ENCODE measurements at regions of chr7 and their contacts with region 1.

Region 1: GRCh38 chr7:774161-775109 is 47.4 kb upstream of the PRKAR1B start:
- DNase-seq: peak; percentile 36
- H3K4me3 ChIP-seq: no peak overlapping the region
- H3K27ac ChIP-seq: no peak overlapping the region
- H3K4me1 ChIP-seq: no peaks in the 10 kb centered on the region
- H3K27me3 ChIP-seq: no peaks in the 10 kb centered on the region
- CTCF ChIP-seq: peak; percentile 91 to 95

Region 2: GRCh38 chr7:322111-322671 is 452.2 kb before region 1 on chr7:
- CTCF ChIA-PET with region 1: no interaction called
- dilution Hi-C with region 1: no loop called
- in situ Hi-C with region 1: loop called (anchors 5 kb)
- intact Hi-C with region 1: loop called (anchors 1 kb)
- DNase-seq: peak; percentile 48
- H3K4me3 ChIP-seq: no peak overlapping the region
- H3K27ac ChIP-seq: no peak overlapping the region
- H3K4me1 ChIP-seq: no peaks in the 10 kb centered on the region
- H3K27me3 ChIP-seq: no peaks in the 10 kb centered on the region
- CTCF ChIP-seq: peak; percentile 64 to 78

Region 3: DNA sequence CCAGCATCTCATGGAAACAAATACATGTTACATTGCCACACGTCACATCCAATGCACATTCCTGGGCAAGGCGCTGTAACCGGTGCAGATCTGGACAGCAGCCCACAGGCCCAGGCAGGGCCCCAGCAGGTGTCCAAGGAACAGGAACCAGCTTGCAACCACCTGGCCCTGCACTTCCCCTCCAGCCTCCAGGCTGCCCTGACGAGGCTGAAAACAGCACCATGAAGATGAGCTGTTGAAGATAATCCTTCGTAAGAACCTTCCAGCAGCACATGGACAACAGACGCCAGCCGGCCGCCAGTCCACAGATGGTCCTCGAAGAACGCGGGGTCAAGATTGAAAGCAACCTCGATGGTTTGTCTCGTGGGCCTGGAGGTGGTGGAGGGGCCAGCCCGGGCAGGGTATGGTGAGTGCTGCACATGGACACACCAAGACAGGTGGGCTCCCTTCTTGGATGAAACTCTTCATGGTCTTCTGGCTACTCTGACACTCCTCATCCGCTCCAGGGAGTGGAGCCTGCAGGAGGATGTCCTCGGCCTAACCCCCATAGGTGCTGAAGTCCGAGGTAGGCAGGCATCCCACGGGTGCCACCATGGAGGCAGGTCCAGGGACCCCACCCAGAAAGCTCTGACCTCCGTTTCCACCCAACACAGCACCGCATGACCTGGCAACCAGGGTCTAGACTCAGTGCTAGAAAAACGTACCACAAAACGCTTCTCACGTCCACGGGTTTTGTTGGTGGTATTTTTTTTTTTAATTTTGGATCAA is 277.7 kb before region 1 on chr7:
- CTCF ChIA-PET with region 1: no interaction called
- dilution Hi-C with region 1: no loop called
- in situ Hi-C with region 1: no loop called
- intact Hi-C with region 1: loop called (anchors 1 kb)
- DNase-seq: peak; percentile 90
- H3K4me3 ChIP-seq: no peak overlapping the region
- H3K27ac ChIP-seq: peak overlapping the region; percentile 56
- H3K4me1 ChIP-seq: peaks cover 30% of the 10 kb centered on the region
- H3K27me3 ChIP-seq: no peaks in the 10 kb centered on the region
- CTCF ChIP-seq: peak in 1 of 2 donors; percentile 18

Region 4: DNA sequence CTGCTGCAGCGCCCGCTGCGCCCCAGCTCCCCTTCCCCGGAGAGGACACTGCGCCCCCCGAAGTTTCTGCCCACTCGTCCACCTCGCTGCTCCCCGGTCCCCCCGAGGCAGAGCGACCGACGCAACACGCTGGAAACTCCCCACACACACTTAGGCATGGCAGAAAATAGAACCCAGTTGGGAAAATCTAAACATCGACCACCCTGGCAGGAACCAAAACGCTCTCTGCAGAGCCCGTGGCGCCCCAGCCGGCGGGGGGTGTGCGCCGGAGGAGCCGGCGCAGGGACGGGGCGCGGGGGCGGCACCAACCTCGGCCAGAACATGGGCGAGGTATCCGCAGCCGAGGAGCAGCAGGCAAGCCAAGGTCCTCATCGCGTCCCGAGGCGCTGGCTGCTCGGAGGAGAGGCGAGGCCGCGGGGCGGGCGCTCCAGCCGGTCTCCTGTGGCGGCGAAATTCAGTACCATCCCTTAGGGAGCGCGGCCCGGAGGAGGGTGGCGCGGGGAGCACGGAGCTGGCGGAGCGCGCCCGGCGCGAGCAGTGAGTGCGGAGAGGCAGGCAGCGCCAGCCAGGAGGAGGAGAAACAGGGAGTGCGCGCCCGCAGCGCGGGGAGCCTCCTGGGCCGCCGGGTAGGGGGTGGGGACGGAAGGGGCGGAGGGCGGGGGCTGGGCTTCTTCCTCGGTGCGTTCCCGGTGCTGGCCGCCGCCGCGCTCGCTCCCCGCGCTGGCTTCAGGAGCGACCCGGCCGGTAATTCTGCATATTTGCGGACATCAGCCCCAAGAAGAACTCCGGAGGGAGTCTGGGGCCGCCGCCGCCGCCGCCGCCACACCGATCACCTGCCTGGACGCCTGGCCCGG is 255.6 kb before region 1 on chr7:
- CTCF ChIA-PET with region 1: no interaction called
- dilution Hi-C with region 1: no loop called
- in situ Hi-C with region 1: loop called in 1 of 2 experiments (anchors 10 kb)
- intact Hi-C with region 1: no loop called
- DNase-seq: peak; percentile 82
- H3K4me3 ChIP-seq: peak overlapping the region; percentile 66 to 92 (median 88)
- H3K27ac ChIP-seq: peak overlapping the region; percentile 46
- H3K4me1 ChIP-seq: peaks cover 50% of the 10 kb centered on the region
- H3K27me3 ChIP-seq: no peaks in the 10 kb centered on the region
- CTCF ChIP-seq: no peak

Region 5: GRCh38 chr7:657565-658119 is 116.8 kb before region 1 on chr7:
- CTCF ChIA-PET with region 1: no interaction called
- dilution Hi-C with region 1: no loop called
- in situ Hi-C with region 1: no loop called
- intact Hi-C with region 1: no loop called
- DNase-seq: no peak
- H3K4me3 ChIP-seq: no peak overlapping the region
- H3K27ac ChIP-seq: no peak overlapping the region
- H3K4me1 ChIP-seq: no peaks in the 10 kb centered on the region
- H3K27me3 ChIP-seq: no peaks in the 10 kb centered on the region
- CTCF ChIP-seq: no peak

Region 6: DNA sequence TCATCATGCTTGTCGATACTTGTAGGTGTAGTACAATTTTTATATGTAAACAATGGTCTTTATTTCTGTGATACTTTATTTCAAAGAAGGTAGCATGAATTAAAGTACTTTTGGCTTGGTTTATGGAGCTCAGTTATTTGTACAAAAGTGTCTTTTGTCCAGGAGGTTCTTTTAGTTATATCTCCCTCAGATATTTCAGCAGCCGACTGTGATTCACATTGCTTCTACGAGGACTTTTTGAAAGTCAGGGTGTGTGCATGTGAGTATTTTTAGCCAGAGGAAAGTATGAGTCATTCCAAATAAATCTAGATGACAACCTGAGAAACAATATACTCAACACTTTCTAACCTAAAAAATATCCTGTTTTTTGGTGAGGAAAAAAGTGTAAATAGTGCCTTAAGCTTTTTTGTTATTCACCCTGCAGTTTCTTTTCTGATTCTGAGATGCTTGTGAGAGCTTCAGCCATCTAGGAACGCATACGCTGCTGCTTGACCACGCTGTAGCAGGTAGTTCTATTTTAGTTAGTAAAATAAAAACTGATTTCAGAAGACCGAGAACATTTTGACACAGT is 57.2 kb after region 1 on chr7:
- CTCF ChIA-PET with region 1: no interaction called
- dilution Hi-C with region 1: loop called (anchors 10 kb)
- in situ Hi-C with region 1: no loop called
- intact Hi-C with region 1: no loop called
- DNase-seq: peak; percentile 93
- H3K4me3 ChIP-seq: peak overlapping the region in 2 of 3 experiments; percentile 36 to 41
- H3K27ac ChIP-seq: peak overlapping the region; percentile 100
- H3K4me1 ChIP-seq: peaks cover 50% of the 10 kb centered on the region
- H3K27me3 ChIP-seq: no peaks in the 10 kb centered on the region
- CTCF ChIP-seq: no peak

Measured in mammary epithelial cell (primary cell).